ENCODE measurements at regions of chr5 and their contacts with region 1.

Region 1: GRCh38 chr5:126676195-126676624 is 75.5 kb downstream of the PHAX start:
- DNase-seq: peak; percentile 56
- H3K4me3 ChIP-seq: no peak overlapping the region
- H3K27ac ChIP-seq: no peak overlapping the region
- H3K4me1 ChIP-seq: no peaks in the 10 kb centered on the region
- H3K27me3 ChIP-seq: peaks cover 3 to 7% of the 10 kb centered on the region in 2 experiments
- CTCF ChIP-seq: peak; percentile 72 to 75
- POLR2A ChIP-seq: no peak

Region 2: GRCh38 chr5:126023883-126024515 is 652.2 kb before region 1 on chr5:
- CTCF ChIA-PET with region 1: no interaction called
- POLR2A ChIA-PET with region 1: no interaction called
- dilution Hi-C with region 1: no loop called
- intact Hi-C with region 1: no loop called
- DNase-seq: no peak
- H3K4me3 ChIP-seq: no peak overlapping the region
- H3K27ac ChIP-seq: no peak overlapping the region
- H3K4me1 ChIP-seq: no peaks in the 10 kb centered on the region
- H3K27me3 ChIP-seq: no peaks in the 10 kb centered on the region
- CTCF ChIP-seq: no peak
- POLR2A ChIP-seq: no peak

Region 3: DNA sequence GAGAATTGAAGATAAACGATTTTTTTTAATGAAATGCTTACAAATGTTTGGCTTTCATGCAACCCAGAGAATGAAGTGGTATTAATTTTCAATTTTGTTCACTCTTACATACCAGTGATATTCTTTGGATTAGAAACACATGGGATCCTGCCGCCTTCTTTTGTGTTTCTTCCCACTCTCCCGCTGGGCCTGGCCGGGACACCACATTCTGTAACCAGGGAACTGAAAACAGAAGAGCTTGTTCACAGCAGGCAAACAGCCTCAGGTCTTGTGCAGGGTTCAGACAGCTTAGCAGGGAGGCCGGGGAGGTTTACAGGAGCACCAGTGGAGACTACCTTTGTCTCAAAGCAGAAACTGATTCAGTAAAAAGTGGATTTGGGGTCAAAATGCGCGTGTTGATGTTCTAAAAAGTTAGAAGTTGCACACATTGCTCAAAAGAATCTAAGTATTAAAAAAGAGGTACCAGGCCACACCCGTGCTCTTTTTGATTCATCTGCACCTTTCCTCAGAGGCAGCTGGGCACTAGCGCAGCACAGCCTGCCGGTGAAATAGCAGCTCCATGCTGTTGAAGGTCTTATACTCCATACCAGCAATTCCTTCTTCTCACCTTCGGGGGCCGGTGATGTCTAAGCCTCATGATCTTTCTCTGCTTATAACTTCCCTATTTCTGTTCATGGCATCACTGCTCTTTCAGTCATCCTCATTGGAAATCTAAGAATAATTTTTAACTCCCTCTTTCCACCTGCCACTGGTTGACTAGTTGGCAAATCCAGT is 185.9 kb before region 1 on chr5:
- CTCF ChIA-PET with region 1: no interaction called
- POLR2A ChIA-PET with region 1: no interaction called
- dilution Hi-C with region 1: no loop called
- intact Hi-C with region 1: no loop called
- DNase-seq: no peak
- H3K4me3 ChIP-seq: no peak overlapping the region
- H3K27ac ChIP-seq: no peak overlapping the region
- H3K4me1 ChIP-seq: no peaks in the 10 kb centered on the region
- H3K27me3 ChIP-seq: no peaks in the 10 kb centered on the region
- CTCF ChIP-seq: no peak
- POLR2A ChIP-seq: no peak

Region 4: DNA sequence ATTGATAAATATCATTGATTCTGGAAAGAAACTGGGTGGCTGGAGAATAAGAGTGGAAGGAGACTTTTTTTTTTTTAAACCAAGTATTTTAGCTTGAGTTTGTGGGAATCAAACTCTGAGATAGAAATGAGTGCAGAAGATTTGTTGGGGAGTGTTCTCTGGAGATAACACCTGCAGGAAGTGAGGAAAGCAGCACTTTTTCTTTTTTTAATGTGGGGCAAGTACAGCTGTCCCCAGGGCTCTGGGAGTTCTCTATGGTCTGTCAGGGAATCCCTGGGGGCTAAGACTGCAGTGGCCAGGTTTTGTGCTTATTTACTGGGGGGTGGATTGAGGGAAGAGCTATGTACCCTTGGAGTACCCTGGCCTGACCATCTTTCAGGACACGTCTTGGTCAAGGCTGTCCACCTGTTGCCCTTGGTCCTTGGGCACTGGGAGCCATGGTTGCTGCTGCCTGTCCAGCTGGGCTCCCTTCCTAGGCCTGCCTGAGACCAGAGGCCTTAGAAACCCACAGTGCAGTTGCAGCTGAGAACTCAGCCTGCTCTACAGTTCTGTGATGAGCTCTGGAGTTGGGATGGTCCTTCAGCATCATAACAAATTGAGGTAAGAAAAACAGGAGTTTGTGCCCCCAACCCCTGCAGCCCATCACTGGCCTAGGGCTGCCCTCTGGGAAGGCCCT is 10.4 kb after region 1 on chr5:
- CTCF ChIA-PET with region 1: interaction called, 20 read pairs
- POLR2A ChIA-PET with region 1: no interaction called
- dilution Hi-C with region 1: no loop called
- intact Hi-C with region 1: no loop called
- DNase-seq: no peak
- H3K4me3 ChIP-seq: no peak overlapping the region
- H3K27ac ChIP-seq: no peak overlapping the region
- H3K4me1 ChIP-seq: no peaks in the 10 kb centered on the region
- H3K27me3 ChIP-seq: peaks cover 0 to 5% of the 10 kb centered on the region in 2 experiments
- CTCF ChIP-seq: no peak
- POLR2A ChIP-seq: no peak

Region 5: DNA sequence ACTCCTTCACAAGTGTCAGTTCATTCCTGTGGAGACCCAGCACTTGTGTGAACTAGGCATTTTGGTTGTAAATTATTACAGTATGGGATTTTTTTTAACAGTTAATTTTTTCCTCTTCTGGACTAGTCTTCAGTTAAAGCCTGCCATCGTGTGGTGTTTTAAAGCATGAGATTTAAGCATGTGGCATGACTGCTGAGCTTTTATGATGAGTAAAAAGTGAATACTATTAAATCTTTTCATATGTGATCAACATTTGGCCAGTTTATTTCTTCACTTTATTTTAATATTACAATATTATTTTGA is 125.7 kb after region 1 on chr5:
- CTCF ChIA-PET with region 1: interaction called, 108 read pairs
- POLR2A ChIA-PET with region 1: no interaction called
- dilution Hi-C with region 1: no loop called
- intact Hi-C with region 1: loop called (anchors 1 kb)
- DNase-seq: peak; percentile 46
- H3K4me3 ChIP-seq: no peak overlapping the region
- H3K27ac ChIP-seq: no peak overlapping the region
- H3K4me1 ChIP-seq: peaks cover 6% of the 10 kb centered on the region
- H3K27me3 ChIP-seq: no peaks in the 10 kb centered on the region
- CTCF ChIP-seq: no peak
- POLR2A ChIP-seq: no peak

Region 6: DNA sequence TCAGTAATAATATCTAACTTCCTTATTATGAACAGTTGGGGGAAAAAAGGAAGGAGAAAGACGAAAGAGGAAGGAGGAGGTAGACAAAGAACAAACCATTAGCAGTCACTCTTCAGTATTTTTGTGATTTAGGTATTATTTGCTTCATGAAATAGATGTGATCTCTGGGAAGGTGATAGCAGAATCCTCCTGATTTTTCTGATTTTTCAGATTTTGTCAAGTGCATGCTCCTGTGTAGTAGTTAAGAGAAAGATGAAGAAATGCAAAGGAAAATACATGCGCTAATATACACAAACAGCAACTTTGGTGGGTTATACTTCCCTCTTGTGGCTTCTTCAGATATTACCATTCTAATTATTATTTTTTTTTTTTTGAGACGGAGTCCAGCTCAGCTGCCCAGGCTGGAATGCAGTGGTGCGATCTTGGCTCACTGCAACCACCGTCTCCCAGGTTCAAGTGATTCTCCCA is 132.3 kb after region 1 on chr5:
- CTCF ChIA-PET with region 1: interaction called, 20 read pairs
- POLR2A ChIA-PET with region 1: no interaction called
- dilution Hi-C with region 1: no loop called
- intact Hi-C with region 1: loop called (anchors 1 kb)
- DNase-seq: peak; percentile 53
- H3K4me3 ChIP-seq: no peak overlapping the region
- H3K27ac ChIP-seq: no peak overlapping the region
- H3K4me1 ChIP-seq: peaks cover 39% of the 10 kb centered on the region
- H3K27me3 ChIP-seq: no peaks in the 10 kb centered on the region
- CTCF ChIP-seq: peak; percentile 13 to 40
- POLR2A ChIP-seq: no peak

Region 7: GRCh38 chr5:127441799-127442484 is 765.7 kb after region 1 on chr5:
- CTCF ChIA-PET with region 1: interaction called, 3 read pairs
- POLR2A ChIA-PET with region 1: no interaction called
- dilution Hi-C with region 1: no loop called
- intact Hi-C with region 1: loop called (anchors 1 kb)
- DNase-seq: peak; percentile 10
- H3K4me3 ChIP-seq: no peak overlapping the region
- H3K27ac ChIP-seq: no peak overlapping the region
- H3K4me1 ChIP-seq: no peaks in the 10 kb centered on the region
- H3K27me3 ChIP-seq: peaks cover 6 to 18% of the 10 kb centered on the region in 2 experiments
- CTCF ChIP-seq: no peak
- POLR2A ChIP-seq: no peak